ENCODE measurements at regions of chr17 and their contacts with region 1.

Region 1: DNA sequence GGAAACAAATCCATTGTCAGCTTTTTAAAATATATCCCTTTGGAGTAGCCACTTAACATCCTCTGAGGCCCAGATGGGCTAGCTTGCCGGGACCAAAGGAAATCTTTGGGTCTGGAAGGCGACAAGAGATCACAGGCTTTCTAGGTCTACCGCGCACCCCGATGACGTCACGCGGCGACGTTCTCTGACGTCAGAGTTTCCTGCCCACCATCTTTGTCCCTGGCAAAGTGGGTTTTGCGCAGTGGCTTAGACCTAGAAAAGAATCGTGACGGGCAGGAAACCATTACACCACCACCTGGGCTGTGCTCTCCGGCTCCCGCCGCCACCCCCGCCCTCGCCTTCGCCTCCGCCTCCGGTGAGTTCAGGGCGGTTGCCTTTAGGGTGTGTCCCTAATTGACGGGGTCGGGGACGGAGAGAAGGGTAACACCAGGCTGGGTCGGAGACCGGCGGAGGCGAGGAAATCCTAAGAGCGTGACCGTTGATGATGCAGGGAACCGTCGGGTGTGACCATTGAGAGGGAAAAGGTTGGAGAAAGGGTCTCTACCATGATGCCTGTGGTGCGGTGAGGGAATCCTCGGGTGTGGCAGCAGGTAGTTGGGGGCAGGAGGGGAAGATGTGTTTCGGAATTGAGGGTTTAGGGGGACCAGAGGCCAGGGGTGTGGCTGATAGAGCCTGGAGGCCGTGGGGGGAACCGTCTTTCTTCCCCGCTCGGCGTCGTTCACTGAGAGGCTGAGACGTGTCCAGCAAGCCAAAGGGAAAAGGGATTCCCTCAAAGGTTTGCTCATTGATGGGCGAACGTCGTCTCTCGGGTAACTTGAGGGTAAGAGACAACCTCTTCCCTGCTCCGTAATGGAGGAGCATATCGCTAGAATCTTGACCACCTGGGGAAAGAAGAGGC is at the start of gene AP2B1:
- DNase-seq: peak; percentile 92
- CTCF ChIP-seq: no peak

Region 2: DNA sequence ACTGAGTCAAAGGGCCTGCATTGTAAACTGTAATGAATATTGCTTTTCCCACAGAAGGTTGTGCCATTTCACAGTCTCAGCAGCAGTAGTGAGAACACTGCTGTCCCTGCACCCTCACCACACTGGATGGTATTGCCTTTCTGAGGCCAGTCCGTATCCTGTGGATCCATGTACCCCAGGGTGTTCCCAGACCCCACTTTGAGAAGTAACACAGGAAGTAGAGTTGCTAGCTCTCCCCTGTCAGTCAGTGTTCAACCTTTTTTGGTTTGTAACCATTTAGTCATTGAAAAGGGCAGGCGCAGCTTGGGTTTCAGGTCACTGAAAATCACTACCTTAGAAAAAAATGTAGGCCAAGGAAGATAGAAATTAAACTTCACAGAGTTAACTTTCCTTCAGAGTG is 87.8 kb before region 1 on chr17:
- CTCF ChIA-PET with region 1: no interaction called
- POLR2A ChIA-PET with region 1: no interaction called
- DNase-seq: no peak
- CTCF ChIP-seq: no peak

Region 3: GRCh38 chr17:35668802-35669201 is 81.5 kb after region 1 on chr17:
- CTCF ChIA-PET with region 1: no interaction called
- POLR2A ChIA-PET with region 1: no interaction called
- DNase-seq: no peak
- CTCF ChIP-seq: no peak

Region 4: GRCh38 chr17:35709874-35710273 is 122.6 kb after region 1 on chr17:
- CTCF ChIA-PET with region 1: no interaction called
- POLR2A ChIA-PET with region 1: interaction called, 10 read pairs
- DNase-seq: no peak
- CTCF ChIP-seq: no peak

Measured in GM10248 (cell line).